Activated CD8-positive, alpha-beta T cell treated with anti-CD3 and anti-CD28 coated beads for 36 hours (primary cell): ENCODE measurements at regions of chr12 and their contacts with region 1.

Region 1: DNA sequence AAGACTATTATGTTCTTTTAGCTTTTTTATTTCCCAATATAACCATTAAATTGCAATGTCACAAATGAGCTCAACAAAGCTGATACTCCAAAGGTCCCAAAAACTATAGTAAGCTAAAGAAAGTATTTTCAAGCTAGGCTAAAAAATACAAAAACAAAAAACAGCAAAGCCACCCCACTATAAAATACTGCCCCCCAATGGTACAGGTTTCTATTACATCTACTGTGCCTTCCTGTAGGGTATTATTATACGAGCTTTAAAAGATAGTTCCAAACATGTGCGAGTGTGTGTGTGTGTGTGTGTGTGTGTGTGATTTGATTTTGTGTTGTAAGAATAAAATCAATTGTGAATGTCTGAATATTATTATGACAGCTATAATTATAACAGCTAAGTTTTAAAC is 1.1 kb downstream of the IFNG start:
- DNase-seq: peak; percentile 57
- ATAC-seq: peak; percentile 43
- H3K4me3 Mint-ChIP-seq: peak overlapping the region; percentile 82
- H3K27ac Mint-ChIP-seq: peak overlapping the region; percentile 83
- H3K4me1 Mint-ChIP-seq: peaks cover 57% of the 10 kb centered on the region
- H3K27me3 Mint-ChIP-seq: no peaks in the 10 kb centered on the region
- CTCF ChIP-seq: peak; percentile 81

Region 2: DNA sequence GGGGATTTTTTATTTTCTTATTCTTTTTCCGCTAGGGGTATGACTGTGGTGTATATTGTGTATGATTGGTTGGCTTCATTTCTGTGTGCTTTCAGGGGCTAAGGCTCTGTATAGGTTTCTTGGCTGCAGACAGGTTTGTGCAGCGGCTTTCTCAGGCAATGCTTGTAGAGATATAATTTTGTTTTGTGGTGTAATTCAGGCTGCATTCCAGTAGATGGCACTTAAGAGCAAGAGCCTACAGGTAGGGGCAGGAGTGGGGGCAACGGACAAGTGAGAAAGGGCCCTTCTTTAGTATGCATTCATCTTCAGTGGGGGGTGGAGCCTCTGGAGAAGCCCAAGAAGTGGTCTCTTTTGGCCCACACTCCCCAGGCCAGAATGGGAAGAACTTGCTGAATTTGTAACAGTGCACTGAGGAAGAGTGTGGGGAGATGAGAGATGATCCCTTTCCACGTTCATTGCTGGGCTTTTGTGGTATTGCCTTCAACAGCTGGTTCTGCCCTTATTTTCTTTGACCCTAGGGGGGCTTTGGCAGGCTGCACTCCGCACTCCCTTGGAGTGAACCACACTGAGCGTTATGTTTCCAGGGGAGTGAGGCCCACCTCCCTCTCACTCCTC is 90.6 kb before region 1 on chr12:
- CTCF ChIA-PET with region 1: interaction called, 26 read pairs
- POLR2A ChIA-PET with region 1: no interaction called
- intact Hi-C with region 1: no loop called
- DNase-seq: peak; percentile 12
- ATAC-seq: peak; percentile 56
- H3K4me3 Mint-ChIP-seq: no peak overlapping the region
- H3K27ac Mint-ChIP-seq: no peak overlapping the region
- H3K4me1 Mint-ChIP-seq: peaks cover 16% of the 10 kb centered on the region
- H3K27me3 Mint-ChIP-seq: no peaks in the 10 kb centered on the region
- CTCF ChIP-seq: peak; percentile 34

Region 3: DNA sequence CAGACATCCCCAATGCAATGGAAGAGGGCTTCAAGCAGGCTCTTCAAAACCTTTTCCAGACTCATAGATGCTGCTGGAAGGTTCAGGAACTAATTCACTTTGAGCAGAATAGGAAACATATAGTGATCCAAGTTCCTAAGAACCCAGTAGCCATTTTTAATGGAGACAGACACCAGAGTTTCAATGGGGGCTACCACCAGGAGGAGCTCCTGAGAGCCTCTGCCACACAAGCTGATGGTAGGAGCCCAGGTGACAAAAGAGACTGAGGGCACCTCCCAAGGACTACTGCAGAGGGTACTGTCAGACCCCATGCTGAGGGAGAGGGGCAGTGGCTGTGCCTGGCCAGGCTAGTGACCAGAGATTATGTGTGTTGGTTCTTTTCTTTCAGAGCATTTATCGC is 44.8 kb before region 1 on chr12:
- CTCF ChIA-PET with region 1: interaction called, 58 read pairs
- POLR2A ChIA-PET with region 1: interaction called, 3 read pairs
- intact Hi-C with region 1: loop called (anchors 2 kb)
- DNase-seq: peak; percentile 74
- ATAC-seq: peak; percentile 54
- H3K4me3 Mint-ChIP-seq: no peak overlapping the region
- H3K27ac Mint-ChIP-seq: no peak overlapping the region
- H3K4me1 Mint-ChIP-seq: peaks cover 25% of the 10 kb centered on the region
- H3K27me3 Mint-ChIP-seq: peaks cover 2% of the 10 kb centered on the region
- CTCF ChIP-seq: peak; percentile 62

Region 4: GRCh38 chr12:68137335-68137830 is 21.0 kb before region 1 on chr12:
- CTCF ChIA-PET with region 1: interaction called, 30 read pairs
- POLR2A ChIA-PET with region 1: interaction called, 5 read pairs
- intact Hi-C with region 1: no loop called
- DNase-seq: peak; percentile 52
- ATAC-seq: peak; percentile 75
- H3K4me3 Mint-ChIP-seq: peak overlapping the region; percentile 44
- H3K27ac Mint-ChIP-seq: peak overlapping the region; percentile 89
- H3K4me1 Mint-ChIP-seq: peaks cover 57% of the 10 kb centered on the region
- H3K27me3 Mint-ChIP-seq: no peaks in the 10 kb centered on the region
- CTCF ChIP-seq: no peak

Region 5: DNA sequence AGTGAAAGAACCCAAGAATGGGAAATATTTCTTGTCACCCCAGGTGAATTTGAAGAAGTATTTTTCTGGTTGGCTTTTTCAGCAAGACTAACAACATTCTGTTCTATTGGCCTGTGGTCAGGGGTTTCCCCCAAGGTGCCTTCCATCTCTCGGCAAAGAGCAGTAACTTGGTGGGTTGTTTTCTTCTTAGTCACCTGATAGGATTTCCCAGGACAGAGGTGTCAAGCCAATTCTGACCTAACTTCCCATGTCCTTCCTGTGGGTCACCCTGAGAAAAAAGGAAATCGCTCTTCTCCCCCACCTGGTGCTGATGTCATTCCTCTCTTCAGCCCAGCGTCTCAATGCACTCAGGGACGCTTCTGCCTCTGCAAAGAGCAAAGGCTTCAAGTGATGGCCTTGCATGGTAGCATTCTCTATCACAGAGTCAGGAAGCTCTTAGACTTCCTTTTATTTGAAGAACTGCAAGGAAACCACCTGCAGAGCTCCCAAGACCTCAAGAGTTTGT is 17.2 kb after region 1 on chr12:
- CTCF ChIA-PET with region 1: interaction called, 43 read pairs
- POLR2A ChIA-PET with region 1: interaction called, 11 read pairs
- intact Hi-C with region 1: no loop called
- DNase-seq: peak; percentile 83
- ATAC-seq: peak; percentile 83
- H3K4me3 Mint-ChIP-seq: peak overlapping the region; percentile 50
- H3K27ac Mint-ChIP-seq: peak overlapping the region; percentile 73
- H3K4me1 Mint-ChIP-seq: peaks cover 71% of the 10 kb centered on the region
- H3K27me3 Mint-ChIP-seq: no peaks in the 10 kb centered on the region
- CTCF ChIP-seq: no peak

Region 6: DNA sequence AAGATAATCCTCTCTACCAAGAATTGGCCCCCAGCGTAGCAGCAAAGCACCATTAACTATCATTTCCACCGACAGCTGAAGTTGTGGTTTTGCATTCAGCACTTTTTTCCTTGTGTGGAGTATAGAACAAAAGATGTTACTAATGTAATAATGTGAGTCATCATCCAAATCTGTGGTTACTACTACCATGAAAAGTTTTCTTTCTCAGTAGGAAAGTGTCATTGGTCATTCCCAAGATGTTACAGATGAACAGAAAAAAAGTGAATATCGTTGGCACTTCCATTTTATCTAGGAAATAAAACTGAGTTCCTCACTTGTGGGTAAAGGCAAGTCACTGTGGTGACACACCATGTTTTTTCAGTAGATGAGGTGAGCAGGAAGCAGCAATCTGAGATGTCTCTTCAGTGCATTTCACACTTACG is 31.4 kb after region 1 on chr12:
- CTCF ChIA-PET with region 1: interaction called, 10 read pairs
- POLR2A ChIA-PET with region 1: no interaction called
- intact Hi-C with region 1: no loop called
- DNase-seq: peak; percentile 68
- ATAC-seq: peak; percentile 87
- H3K4me3 Mint-ChIP-seq: peak overlapping the region; percentile 6
- H3K27ac Mint-ChIP-seq: peak overlapping the region; percentile 84
- H3K4me1 Mint-ChIP-seq: peaks cover 45% of the 10 kb centered on the region
- H3K27me3 Mint-ChIP-seq: peaks cover 3% of the 10 kb centered on the region
- CTCF ChIP-seq: no peak